PC-9 (cell line): ENCODE measurements at regions of chr3 and their contacts with region 1.

Region 1: DNA sequence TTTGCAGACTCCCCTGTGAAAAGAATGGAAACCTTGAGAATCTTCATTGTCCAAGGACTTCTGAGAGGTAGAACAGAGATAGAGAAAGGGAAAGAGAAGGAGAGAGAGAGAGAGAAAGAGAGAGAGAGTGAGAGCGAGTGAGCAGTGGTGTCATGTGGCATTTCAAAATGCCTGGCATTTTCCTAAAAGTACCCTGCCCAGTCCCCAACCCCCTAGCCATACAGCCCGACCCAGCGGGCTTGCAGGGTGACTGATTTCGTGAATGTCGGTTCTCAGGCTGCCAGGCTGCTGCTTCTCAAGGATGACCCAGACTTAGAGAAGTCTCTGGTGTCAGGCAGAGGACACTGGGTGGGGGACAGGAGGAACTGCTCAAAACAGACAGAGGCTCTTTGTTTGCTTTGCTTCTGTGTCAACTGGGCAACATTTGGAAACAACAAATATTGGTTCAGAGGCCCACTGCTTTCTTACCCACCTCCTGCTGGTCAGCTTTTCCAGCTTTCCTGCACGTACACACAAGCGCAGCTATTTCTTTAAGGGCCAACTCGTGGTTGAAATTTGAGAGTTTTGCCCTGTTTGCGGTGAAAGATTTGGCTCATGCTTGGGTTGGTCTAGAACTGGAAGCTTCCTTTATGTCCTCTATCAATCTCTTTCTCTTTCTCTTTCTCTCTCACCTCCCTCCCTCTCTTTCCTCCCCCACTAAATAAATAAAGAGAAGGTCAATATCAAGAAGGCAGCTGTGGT is 3.7 kb upstream of the TF start:
- DNase-seq: peak; percentile 5 to 82
- H3K4me3 ChIP-seq: peak overlapping the region; percentile 34; the same call in 1 of the 2 replicates
- H3K27ac ChIP-seq: no peak overlapping the region
- H3K4me1 ChIP-seq: peaks cover 16% of the 10 kb centered on the region
- H3K27me3 ChIP-seq: no peaks in the 10 kb centered on the region; the same call in 1 of the 2 replicates
- CTCF ChIP-seq: no peak

Region 2: GRCh38 chr3:133237380-133237779 is 505.1 kb before region 1 on chr3:
- CTCF ChIA-PET with region 1: interaction called, 11 read pairs
- POLR2A ChIA-PET with region 1: no interaction called
- intact Hi-C with region 1: no loop called
- DNase-seq: no peak
- H3K4me3 ChIP-seq: no peak overlapping the region
- H3K27ac ChIP-seq: no peak overlapping the region
- H3K4me1 ChIP-seq: no peaks in the 10 kb centered on the region
- H3K27me3 ChIP-seq: no peaks in the 10 kb centered on the region
- CTCF ChIP-seq: no peak

Region 3: DNA sequence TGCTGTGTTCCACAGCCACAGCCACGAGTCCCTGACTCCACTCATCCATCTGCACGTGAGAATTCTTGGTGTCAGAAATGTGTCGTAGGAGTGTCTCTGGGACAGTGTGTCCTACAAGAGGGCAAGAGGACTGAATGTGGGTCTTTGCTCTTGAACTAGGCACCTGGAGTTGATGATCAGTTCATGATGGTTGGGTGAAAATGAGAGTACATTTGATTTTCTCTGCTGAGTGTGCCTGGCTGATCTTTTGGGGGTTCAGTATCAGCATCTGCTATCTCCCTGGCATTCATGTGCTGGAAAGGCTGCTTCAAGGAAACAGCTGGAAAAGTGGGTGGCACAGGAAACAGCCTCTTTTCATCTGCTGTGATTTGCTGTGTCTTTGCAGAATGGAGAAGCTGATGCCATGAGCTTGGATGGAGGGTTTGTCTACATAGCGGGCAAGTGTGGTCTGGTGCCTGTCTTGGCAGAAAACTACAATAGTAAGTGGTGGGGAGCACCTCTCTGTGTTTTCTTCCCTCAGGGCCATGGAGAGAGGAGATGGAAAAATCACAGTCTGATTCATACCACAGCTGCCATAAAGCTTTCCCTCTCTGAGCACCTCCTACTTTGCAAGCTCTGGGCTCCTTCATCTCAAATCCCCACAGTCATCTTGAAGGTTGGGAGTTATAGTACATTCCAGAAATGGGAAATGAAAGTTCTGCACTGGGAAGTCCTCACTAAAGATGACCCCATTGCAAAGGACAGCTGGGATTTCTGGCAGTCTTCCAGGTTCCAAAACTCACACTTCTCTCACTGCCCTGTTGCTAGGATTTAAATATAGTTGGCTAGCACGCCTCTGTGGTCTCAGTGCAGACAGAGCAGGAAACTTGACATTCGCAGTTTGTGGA is 21.5 kb after region 1 on chr3:
- CTCF ChIA-PET with region 1: no interaction called
- POLR2A ChIA-PET with region 1: no interaction called
- intact Hi-C with region 1: no loop called
- DNase-seq: no peak
- H3K4me3 ChIP-seq: no peak overlapping the region
- H3K27ac ChIP-seq: no peak overlapping the region
- H3K4me1 ChIP-seq: no peaks in the 10 kb centered on the region
- H3K27me3 ChIP-seq: peaks cover 11% of the 10 kb centered on the region; the same call in 1 of the 2 replicates
- CTCF ChIP-seq: no peak